Activated CD8-positive, alpha-beta T cell treated with anti-CD3 and anti-CD28 coated beads, Interleukin-2, amount 10 ng/mL, durations not matched to agents 7 days and 5 days (primary cell): ENCODE measurements at regions of chr17 and their contacts with region 1.

Region 1: GRCh38 chr17:16285957-16286640 is 67.2 kb downstream of the CENPV start:
- DNase-seq: peak; percentile 93
- ATAC-seq: peak; percentile 96
- H3K4me3 Mint-ChIP-seq: peak overlapping the region; percentile 72
- H3K27ac Mint-ChIP-seq: peak overlapping the region; percentile 96
- H3K4me1 Mint-ChIP-seq: peaks cover 50% of the 10 kb centered on the region
- H3K27me3 Mint-ChIP-seq: no peaks in the 10 kb centered on the region

Region 2: DNA sequence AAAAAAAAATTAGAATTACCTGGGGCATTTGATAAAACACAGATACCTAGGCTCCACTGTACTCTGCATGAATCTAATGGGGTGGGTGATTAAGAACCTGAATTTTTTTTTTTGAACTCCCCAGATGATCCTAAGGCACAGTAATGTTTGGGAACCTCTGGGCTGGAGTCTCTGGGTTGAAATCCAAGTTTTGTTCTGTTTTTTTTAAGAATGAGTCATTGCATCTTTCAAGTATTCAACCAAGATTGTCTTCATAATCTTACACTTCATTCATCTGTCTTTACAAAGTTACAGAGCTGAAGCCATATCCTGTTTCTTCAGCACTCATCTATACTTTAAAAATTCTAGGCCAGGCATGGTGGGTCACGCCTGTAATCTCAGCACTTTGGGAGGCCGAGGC is 16.4 kb before region 1 on chr17:
- CTCF ChIA-PET with region 1: interaction called, 7 read pairs
- POLR2A ChIA-PET with region 1: interaction called, 19 read pairs
- DNase-seq: no peak
- ATAC-seq: no peak
- H3K4me3 Mint-ChIP-seq: no peak overlapping the region
- H3K27ac Mint-ChIP-seq: peak overlapping the region; percentile 69
- H3K4me1 Mint-ChIP-seq: peaks cover 34% of the 10 kb centered on the region
- H3K27me3 Mint-ChIP-seq: no peaks in the 10 kb centered on the region

Region 3: GRCh38 chr17:16304830-16305229 is 18.7 kb after region 1 on chr17:
- CTCF ChIA-PET with region 1: interaction called, 23 read pairs
- POLR2A ChIA-PET with region 1: interaction called, 5 read pairs
- DNase-seq: peak; percentile 37
- ATAC-seq: no peak
- H3K4me3 Mint-ChIP-seq: no peak overlapping the region
- H3K27ac Mint-ChIP-seq: no peak overlapping the region
- H3K4me1 Mint-ChIP-seq: no peaks in the 10 kb centered on the region
- H3K27me3 Mint-ChIP-seq: no peaks in the 10 kb centered on the region

Region 4: GRCh38 chr17:16319969-16320368 is 33.9 kb after region 1 on chr17:
- CTCF ChIA-PET with region 1: no interaction called
- POLR2A ChIA-PET with region 1: no interaction called
- DNase-seq: no peak
- ATAC-seq: no peak
- H3K4me3 Mint-ChIP-seq: no peak overlapping the region
- H3K27ac Mint-ChIP-seq: no peak overlapping the region
- H3K4me1 Mint-ChIP-seq: no peaks in the 10 kb centered on the region
- H3K27me3 Mint-ChIP-seq: no peaks in the 10 kb centered on the region

Region 5: GRCh38 chr17:16380640-16381495 is 94.8 kb after region 1 on chr17 and contains the start of gene UBB:
- CTCF ChIA-PET with region 1: interaction called, 3 read pairs
- POLR2A ChIA-PET with region 1: interaction called, 19 read pairs
- DNase-seq: peak; percentile 97
- ATAC-seq: peak; percentile 92
- H3K4me3 Mint-ChIP-seq: peak within 1 kb of the TSS; percentile 97
- H3K27ac Mint-ChIP-seq: peak within 1 kb of the TSS; percentile 96
- H3K4me1 Mint-ChIP-seq: peaks cover 38% of the 10 kb centered on the region
- H3K27me3 Mint-ChIP-seq: no peaks in the 10 kb centered on the region
- total RNA-seq, gene UBB: 1,415 to 1,441 TPM